Ovary (tissue), 10 donors: ENCODE measurements at regions of chr13 and their contacts with region 1.

Region 1: DNA sequence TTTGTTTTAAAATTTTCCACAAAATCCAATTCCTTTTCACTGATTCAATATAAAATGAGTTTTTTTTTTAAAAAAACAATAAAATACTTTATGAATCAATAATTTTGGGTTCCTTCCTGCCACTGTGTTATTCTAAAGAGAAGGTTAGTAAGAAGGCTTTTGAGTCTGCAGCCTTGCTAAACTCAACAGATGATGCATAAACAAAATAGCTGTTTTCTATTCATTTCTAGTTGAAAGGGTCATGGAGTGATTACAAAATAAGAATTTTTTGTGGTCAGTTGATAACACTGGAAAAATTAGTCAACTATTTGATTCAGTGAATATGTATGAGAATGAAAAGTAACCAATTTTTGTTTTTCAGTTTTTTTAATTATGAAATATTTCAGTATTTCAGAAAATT is 169.9 kb downstream of the VWA8 start:
- DNase-seq: no peak
- H3K4me3 ChIP-seq: no peak overlapping the region
- H3K27ac ChIP-seq: no peak overlapping the region
- H3K4me1 ChIP-seq: no peaks in the 10 kb centered on the region
- H3K27me3 ChIP-seq: no peaks in the 10 kb centered on the region
- CTCF ChIP-seq: no peak
- EP300 ChIP-seq: no peak
- POLR2A ChIP-seq: no peak

Region 2: GRCh38 chr13:41774605-41775218 is 16.3 kb before region 1 on chr13:
- intact Hi-C with region 1: loop called in 1 of 4 experiments (anchors 2 kb)
- DNase-seq: no peak
- H3K4me3 ChIP-seq: no peak overlapping the region
- H3K27ac ChIP-seq: no peak overlapping the region
- H3K4me1 ChIP-seq: no peaks in the 10 kb centered on the region
- H3K27me3 ChIP-seq: no peaks in the 10 kb centered on the region
- CTCF ChIP-seq: no peak
- EP300 ChIP-seq: no peak
- POLR2A ChIP-seq: no peak

Region 3: GRCh38 chr13:41905600-41906254 is 114.7 kb after region 1 on chr13:
- intact Hi-C with region 1: no loop called
- DNase-seq: no peak
- H3K4me3 ChIP-seq: no peak overlapping the region
- H3K27ac ChIP-seq: no peak overlapping the region
- H3K4me1 ChIP-seq: no peaks in the 10 kb centered on the region
- H3K27me3 ChIP-seq: no peaks in the 10 kb centered on the region
- CTCF ChIP-seq: no peak
- EP300 ChIP-seq: no peak
- POLR2A ChIP-seq: no peak

Region 4: GRCh38 chr13:42486711-42487198 is 695.7 kb after region 1 on chr13:
- intact Hi-C with region 1: no loop called
- DNase-seq: no peak
- H3K4me3 ChIP-seq: no peak overlapping the region
- H3K27ac ChIP-seq: no peak overlapping the region
- H3K4me1 ChIP-seq: no peaks in the 10 kb centered on the region
- H3K27me3 ChIP-seq: no peaks in the 10 kb centered on the region
- CTCF ChIP-seq: no peak
- EP300 ChIP-seq: no peak
- POLR2A ChIP-seq: no peak